Posterior vena cava (tissue), 2 donors: ENCODE measurements at regions of chr2 and their contacts with region 1.

Region 1: GRCh38 chr2:239751679-239752355 is 273.3 kb downstream of the NDUFA10 start:
- DNase-seq: no peak

Region 2: GRCh38 chr2:239249776-239250175 is 502.0 kb before region 1 on chr2:
- intact Hi-C with region 1: loop called in 1 of 2 experiments (anchors 5 kb)
- DNase-seq: peak; percentile 91

Region 3: DNA sequence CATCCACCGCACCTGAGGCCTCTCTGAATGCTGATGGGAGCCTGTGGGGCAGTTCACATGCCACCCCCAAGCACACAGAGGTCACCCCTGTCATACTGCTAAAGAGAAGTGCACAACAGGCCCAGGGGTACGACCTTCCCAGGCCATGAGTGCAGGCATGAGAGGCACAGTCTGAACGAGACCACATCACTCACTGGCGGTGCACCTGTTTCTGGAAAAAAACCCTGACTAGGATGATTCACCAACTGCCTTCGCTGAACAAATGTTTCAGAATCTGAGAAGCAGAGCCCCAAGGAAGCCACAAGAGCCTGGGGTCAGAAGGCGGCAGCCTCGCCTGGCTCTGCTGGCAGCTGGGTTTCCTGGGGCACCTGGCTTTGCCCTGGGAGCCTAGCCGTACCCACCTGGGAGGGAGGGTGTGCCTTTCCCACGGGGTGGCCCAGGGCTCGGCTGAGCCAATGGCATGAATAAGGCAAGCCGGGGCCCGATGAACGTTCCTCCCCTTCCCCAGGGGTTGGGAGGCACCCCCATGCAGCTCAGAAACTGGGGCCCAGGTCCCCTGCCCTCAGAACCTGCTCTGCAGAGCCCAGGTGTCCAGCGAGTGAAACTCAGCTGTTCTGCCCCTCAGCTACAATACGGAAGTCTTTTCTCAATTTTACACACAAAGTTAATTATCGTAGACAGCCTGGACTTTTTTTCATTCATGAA is 424.8 kb before region 1 on chr2:
- intact Hi-C with region 1: loop called in 1 of 2 experiments (anchors 5 kb)
- DNase-seq: peak; percentile 53

Region 4: GRCh38 chr2:239630618-239631286 is 121.1 kb before region 1 on chr2:
- intact Hi-C with region 1: no loop called
- DNase-seq: peak; percentile 81

Region 5: GRCh38 chr2:239660390-239661230 is 91.2 kb before region 1 on chr2:
- intact Hi-C with region 1: no loop called
- DNase-seq: peak; percentile 59

Region 6: DNA sequence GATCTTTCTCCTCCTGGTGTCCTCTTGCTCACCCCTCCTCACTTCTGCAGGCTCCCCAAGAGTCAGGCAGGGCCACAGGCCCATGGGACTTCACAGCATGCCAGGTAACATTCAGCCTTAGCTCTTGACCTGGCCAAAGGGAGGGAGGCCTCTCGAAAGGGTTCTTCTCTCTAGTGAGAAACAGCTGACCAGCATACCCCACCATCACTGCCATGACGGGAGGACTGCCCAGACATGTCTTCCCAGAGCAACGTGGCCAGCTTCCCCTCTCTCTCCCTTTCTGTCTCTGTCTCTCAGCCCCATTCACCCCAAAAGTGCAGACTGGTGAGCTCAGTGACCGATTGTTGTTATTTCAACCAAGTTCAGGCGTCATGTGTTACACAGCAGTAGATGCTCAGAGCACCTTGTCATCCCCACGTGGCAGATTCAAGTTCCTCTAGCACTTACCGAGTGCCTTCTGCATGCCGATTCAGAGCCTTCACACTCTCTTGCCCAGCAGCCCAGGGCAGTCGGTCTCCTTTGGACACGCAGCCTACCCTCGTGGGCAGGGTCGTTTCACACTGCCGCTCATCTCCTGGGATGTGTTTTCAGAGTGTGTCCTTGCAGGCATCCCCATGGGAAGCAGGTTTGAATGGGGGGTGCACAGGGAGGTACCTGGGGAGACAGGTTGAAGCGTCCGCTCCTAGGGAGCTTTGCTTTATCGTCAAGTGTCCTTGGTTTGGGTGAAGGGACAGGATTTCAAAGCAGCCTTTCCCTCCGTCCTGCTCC is 13.4 kb after region 1 on chr2:
- intact Hi-C with region 1: loop called in 1 of 2 experiments (anchors 1 kb)
- DNase-seq: peak; percentile 46